Activated naive CD4-positive, alpha-beta T cell treated with anti-CD3 and anti-CD28 coated beads, Interleukin-2, amount 10 ng/mL, durations not matched to agents 7 days and 5 days (primary cell): ENCODE measurements at regions of chr3 and their contacts with region 1.

Region 1: DNA sequence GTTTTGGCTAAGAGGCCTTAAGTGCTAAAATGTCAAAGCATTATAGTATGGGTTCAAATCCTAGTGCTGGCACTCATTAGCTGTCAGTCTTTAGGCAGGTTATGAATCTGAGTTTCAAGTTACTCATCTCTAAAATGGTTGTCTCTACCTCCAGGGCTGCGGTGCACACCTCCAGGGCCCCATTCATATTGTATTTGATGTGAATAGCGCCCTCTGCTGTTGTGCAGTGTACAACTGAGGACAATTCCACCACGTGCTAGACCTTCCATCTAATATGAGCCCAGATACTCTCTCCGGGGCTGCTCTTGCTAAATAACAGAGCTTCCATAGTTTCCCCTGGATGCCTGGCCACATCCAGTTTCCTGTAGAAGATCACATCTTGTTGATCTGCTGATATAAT is 54.3 kb downstream of the OXNAD1 start:
- DNase-seq: peak; percentile 89
- H3K4me3 Mint-ChIP-seq: no peak overlapping the region
- H3K27ac Mint-ChIP-seq: peak overlapping the region; percentile 94
- H3K4me1 Mint-ChIP-seq: peaks cover 71% of the 10 kb centered on the region
- H3K27me3 Mint-ChIP-seq: no peaks in the 10 kb centered on the region

Region 2: GRCh38 chr3:16264708-16265454 is 54.4 kb before region 1 on chr3 and contains the starts of genes DPH3 and OXNAD1:
- CTCF ChIA-PET with region 1: interaction called, 46 read pairs
- DNase-seq: peak; percentile 99
- H3K4me3 Mint-ChIP-seq: peak within 1 kb of the TSS; percentile 97
- H3K27ac Mint-ChIP-seq: peak within 1 kb of the TSS; percentile 96
- H3K4me1 Mint-ChIP-seq: peaks cover 39% of the 10 kb centered on the region
- H3K27me3 Mint-ChIP-seq: no peaks in the 10 kb centered on the region

Region 3: GRCh38 chr3:16300881-16301359 is 18.4 kb before region 1 on chr3:
- CTCF ChIA-PET with region 1: interaction called, 246 read pairs
- DNase-seq: peak; percentile 73
- H3K4me3 Mint-ChIP-seq: peak overlapping the region; percentile 83
- H3K27ac Mint-ChIP-seq: peak overlapping the region; percentile 96
- H3K4me1 Mint-ChIP-seq: peaks cover 98% of the 10 kb centered on the region
- H3K27me3 Mint-ChIP-seq: no peaks in the 10 kb centered on the region

Region 4: DNA sequence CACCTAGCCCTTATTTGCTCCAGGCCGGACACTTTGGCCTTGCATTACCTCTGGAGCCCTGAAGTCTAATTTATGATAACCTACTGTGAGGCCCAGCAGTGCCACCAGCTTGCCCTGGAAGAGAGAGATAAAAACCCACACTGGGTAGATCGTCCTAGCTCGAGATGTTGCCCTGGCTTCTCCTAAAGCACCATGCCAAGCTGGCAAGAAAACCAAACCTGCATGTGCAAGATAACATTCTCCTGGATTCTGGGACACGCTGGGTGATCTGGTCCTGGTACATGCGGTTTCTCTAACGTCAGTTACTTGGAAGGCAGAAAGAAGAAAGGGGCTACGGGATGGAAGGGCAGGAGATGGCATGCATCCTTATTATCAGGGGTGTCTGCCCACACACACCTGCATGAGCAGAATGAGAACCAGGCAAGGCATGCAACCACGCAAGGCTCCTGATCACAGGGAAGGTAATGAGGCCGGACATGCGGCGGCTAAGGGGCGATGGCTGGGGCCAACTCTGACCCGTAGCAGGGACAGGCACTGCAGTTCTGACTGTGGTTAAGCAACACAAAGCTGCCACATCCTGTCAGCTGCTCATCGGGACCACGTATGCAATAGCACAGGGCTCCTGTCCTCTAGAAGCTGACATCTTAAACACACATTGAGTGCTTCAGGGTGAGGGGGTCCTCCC is 18.7 kb after region 1 on chr3:
- CTCF ChIA-PET with region 1: interaction called, 13 read pairs
- DNase-seq: peak; percentile 79
- H3K4me3 Mint-ChIP-seq: no peak overlapping the region
- H3K27ac Mint-ChIP-seq: peak overlapping the region; percentile 76
- H3K4me1 Mint-ChIP-seq: peaks cover 50% of the 10 kb centered on the region
- H3K27me3 Mint-ChIP-seq: no peaks in the 10 kb centered on the region

Region 5: GRCh38 chr3:16511681-16512434 is 192.6 kb after region 1 on chr3:
- CTCF ChIA-PET with region 1: interaction called, 10 read pairs
- DNase-seq: peak; percentile 82
- H3K4me3 Mint-ChIP-seq: peak overlapping the region; percentile 89
- H3K27ac Mint-ChIP-seq: peak overlapping the region; percentile 97
- H3K4me1 Mint-ChIP-seq: peaks cover 76% of the 10 kb centered on the region
- H3K27me3 Mint-ChIP-seq: no peaks in the 10 kb centered on the region

Region 6: GRCh38 chr3:16550676-16551341 is 231.5 kb after region 1 on chr3:
- CTCF ChIA-PET with region 1: interaction called, 23 read pairs
- DNase-seq: peak; percentile 82
- H3K4me3 Mint-ChIP-seq: no peak overlapping the region
- H3K27ac Mint-ChIP-seq: peak overlapping the region; percentile 39
- H3K4me1 Mint-ChIP-seq: peaks cover 10% of the 10 kb centered on the region
- H3K27me3 Mint-ChIP-seq: peaks cover 34% of the 10 kb centered on the region